Activated CD8-positive, alpha-beta memory T cell treated with anti-CD3 and anti-CD28 coated beads, Interleukin-2, amount 10 ng/mL, durations not matched to agents 7 days and 5 days (primary cell): ENCODE measurements at regions of chr5 and their contacts with region 1.

Region 1: GRCh38 chr5:180810210-180810958 is 7.8 kb upstream of the MGAT1 start:
- DNase-seq: peak; percentile 96
- ATAC-seq: peak; percentile 82
- H3K4me3 Mint-ChIP-seq: peak overlapping the region; percentile 78
- H3K27ac Mint-ChIP-seq: peak overlapping the region; percentile 100
- H3K4me1 Mint-ChIP-seq: peaks cover 61% of the 10 kb centered on the region
- H3K27me3 Mint-ChIP-seq: no peaks in the 10 kb centered on the region

Region 2: GRCh38 chr5:180831139-180832048 is 21.0 kb after region 1 on chr5:
- CTCF ChIA-PET with region 1: interaction called, 16 read pairs
- DNase-seq: peak; percentile 84
- ATAC-seq: peak; percentile 86
- H3K4me3 Mint-ChIP-seq: peak overlapping the region; percentile 100
- H3K27ac Mint-ChIP-seq: peak overlapping the region; percentile 98
- H3K4me1 Mint-ChIP-seq: peaks cover 31% of the 10 kb centered on the region
- H3K27me3 Mint-ChIP-seq: no peaks in the 10 kb centered on the region

Region 3: GRCh38 chr5:180860887-180861822 is 50.8 kb after region 1 on chr5 and contains the start of gene ZFP62:
- CTCF ChIA-PET with region 1: interaction called, 12 read pairs
- DNase-seq: peak; percentile 91
- ATAC-seq: peak; percentile 89
- H3K4me3 Mint-ChIP-seq: peak within 1 kb of the TSS; percentile 89
- H3K27ac Mint-ChIP-seq: peak within 1 kb of the TSS; percentile 92
- H3K4me1 Mint-ChIP-seq: peaks cover 20% of the 10 kb centered on the region
- H3K27me3 Mint-ChIP-seq: peaks cover 6% of the 10 kb centered on the region
- total RNA-seq, gene ZFP62: 23.2 to 25.2 TPM

Region 4: GRCh38 chr5:181207214-181208107 is 397.1 kb after region 1 on chr5:
- CTCF ChIA-PET with region 1: no interaction called
- DNase-seq: peak; percentile 91
- ATAC-seq: peak; percentile 57
- H3K4me3 Mint-ChIP-seq: peak overlapping the region; percentile 85
- H3K27ac Mint-ChIP-seq: peak overlapping the region; percentile 90
- H3K4me1 Mint-ChIP-seq: peaks cover 27% of the 10 kb centered on the region
- H3K27me3 Mint-ChIP-seq: peaks cover 27% of the 10 kb centered on the region